BJ (cell line): ENCODE measurements at regions of chrX and their contacts with region 1.

Region 1: DNA sequence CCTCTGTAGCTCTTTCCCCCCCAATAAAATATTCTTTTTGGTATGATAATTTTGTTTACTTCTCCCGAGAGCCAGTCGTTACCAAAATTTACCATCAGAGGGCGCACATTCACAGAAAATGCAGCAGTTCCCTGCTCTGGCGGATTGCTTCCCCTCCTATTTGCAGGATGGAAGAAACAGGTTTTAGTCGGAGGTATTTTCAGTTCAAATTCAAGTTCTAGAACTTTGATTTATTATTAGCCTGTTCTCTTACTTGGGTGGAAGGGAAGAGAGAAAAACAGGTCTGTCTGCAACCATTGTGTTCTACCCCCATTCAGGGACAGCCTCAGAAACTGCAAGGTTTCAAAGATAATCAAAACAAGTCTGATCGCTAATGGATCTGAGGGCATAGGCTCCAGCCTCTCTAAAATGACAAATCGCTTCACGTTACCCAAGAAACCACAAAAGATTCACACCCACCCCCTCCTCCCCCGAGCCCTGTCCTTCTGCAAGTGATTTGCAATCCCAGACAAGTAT is 263.8 kb upstream of the RPS6KA3 start:
- DNase-seq: no peak
- H3K4me3 ChIP-seq: no peak overlapping the region; the same call in 1 of the 2 replicates
- H3K27me3 ChIP-seq: no peaks in the 10 kb centered on the region
- CTCF ChIP-seq: peak; percentile 65

Region 2: GRCh38 chrX:21479695-21480270 is 949.3 kb after region 1 on chrX:
- CTCF ChIA-PET with region 1: interaction called, 15 read pairs
- POLR2A ChIA-PET with region 1: no interaction called
- DNase-seq: peak; percentile 4
- H3K4me3 ChIP-seq: no peak overlapping the region
- H3K27me3 ChIP-seq: no peaks in the 10 kb centered on the region
- CTCF ChIP-seq: peak; percentile 63

Region 3: DNA sequence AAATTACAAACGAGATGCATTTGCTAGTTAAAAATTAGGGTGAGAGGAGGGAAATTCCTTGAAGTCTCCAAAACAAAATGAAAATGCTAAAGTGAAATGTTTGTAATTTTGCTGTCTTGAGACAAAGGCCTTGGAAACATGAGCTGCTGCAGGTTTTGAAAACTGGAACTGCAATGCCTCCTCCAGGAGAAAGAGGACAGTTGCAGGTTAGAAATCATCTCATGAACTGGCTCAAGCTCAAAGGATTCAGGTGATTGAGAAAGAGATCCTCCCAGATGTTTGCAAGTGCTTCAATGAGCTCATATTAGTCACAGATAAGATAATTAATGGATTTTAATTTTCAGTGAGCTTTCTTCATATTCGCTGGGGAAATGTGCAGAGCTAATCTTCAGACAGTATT is 1195.0 kb after region 1 on chrX:
- CTCF ChIA-PET with region 1: interaction called, 16 read pairs
- POLR2A ChIA-PET with region 1: no interaction called
- DNase-seq: no peak
- H3K4me3 ChIP-seq: no peak overlapping the region
- H3K27me3 ChIP-seq: no peaks in the 10 kb centered on the region
- CTCF ChIP-seq: peak; percentile 49

Region 4: GRCh38 chrX:21745756-21746155 is 1215.3 kb after region 1 on chrX:
- CTCF ChIA-PET with region 1: interaction called, 18 read pairs
- POLR2A ChIA-PET with region 1: no interaction called
- DNase-seq: no peak
- H3K4me3 ChIP-seq: no peak overlapping the region
- H3K27me3 ChIP-seq: no peaks in the 10 kb centered on the region
- CTCF ChIP-seq: peak; percentile 46